Caco-2 (cell line): ENCODE measurements at regions of chr3 and their contacts with region 1.

Region 1: DNA sequence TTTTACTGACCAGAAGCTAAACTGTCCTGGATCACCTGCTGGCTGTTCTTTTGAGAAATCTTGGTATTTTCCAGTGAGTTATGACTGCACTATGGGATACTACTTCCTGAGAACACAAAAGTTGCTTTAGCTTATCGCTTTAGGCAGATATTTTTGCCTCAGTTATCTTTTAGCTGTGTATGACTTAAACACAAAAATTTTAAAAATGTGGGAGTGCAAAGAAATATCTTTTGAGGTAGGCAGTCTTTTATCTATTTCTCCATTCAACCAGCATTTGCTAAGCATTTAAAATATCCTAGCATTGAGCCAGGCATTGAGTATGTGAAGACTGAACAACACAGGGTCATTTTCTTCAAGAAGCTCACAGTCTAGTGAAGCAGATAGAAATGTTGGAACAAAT is 981.9 kb downstream of the FHIT start:
- DNase-seq: peak in 1 of 2 experiments; percentile 55
- H3K4me3 ChIP-seq: no peak overlapping the region
- H3K4me3 Mint-ChIP-seq: peak overlapping the region; percentile 24
- H3K27ac Mint-ChIP-seq: peak overlapping the region; percentile 95
- H3K4me1 ChIP-seq: peaks cover 50% of the 10 kb centered on the region
- H3K4me1 Mint-ChIP-seq: peaks cover 33% of the 10 kb centered on the region
- H3K27me3 ChIP-seq: no peaks in the 10 kb centered on the region
- H3K27me3 Mint-ChIP-seq: no peaks in the 10 kb centered on the region
- CTCF ChIP-seq: no peak

Region 2: GRCh38 chr3:60307562-60308199 is 38.3 kb after region 1 on chr3:
- CTCF ChIA-PET with region 1: no interaction called
- POLR2A ChIA-PET with region 1: no interaction called
- intact Hi-C with region 1: loop called (anchors 2 kb)
- DNase-seq: no peak
- H3K4me3 ChIP-seq: no peak overlapping the region
- H3K4me3 Mint-ChIP-seq: no peak overlapping the region
- H3K27ac Mint-ChIP-seq: no peak overlapping the region
- H3K4me1 ChIP-seq: peaks cover 16% of the 10 kb centered on the region; the same call in 1 of the 2 replicates
- H3K4me1 Mint-ChIP-seq: peaks cover 26% of the 10 kb centered on the region
- H3K27me3 ChIP-seq: no peaks in the 10 kb centered on the region
- H3K27me3 Mint-ChIP-seq: no peaks in the 10 kb centered on the region
- CTCF ChIP-seq: no peak

Region 3: GRCh38 chr3:60313951-60314461 is 44.6 kb after region 1 on chr3:
- CTCF ChIA-PET with region 1: no interaction called
- POLR2A ChIA-PET with region 1: no interaction called
- intact Hi-C with region 1: loop called (anchors 1 kb)
- DNase-seq: peak; percentile 32 to 39
- H3K4me3 ChIP-seq: no peak overlapping the region
- H3K4me3 Mint-ChIP-seq: no peak overlapping the region
- H3K27ac Mint-ChIP-seq: no peak overlapping the region
- H3K4me1 ChIP-seq: peaks cover 26% of the 10 kb centered on the region
- H3K4me1 Mint-ChIP-seq: peaks cover 13% of the 10 kb centered on the region
- H3K27me3 ChIP-seq: no peaks in the 10 kb centered on the region
- H3K27me3 Mint-ChIP-seq: no peaks in the 10 kb centered on the region
- CTCF ChIP-seq: no peak

Region 4: GRCh38 chr3:60399861-60400845 is 130.8 kb after region 1 on chr3:
- CTCF ChIA-PET with region 1: no interaction called
- POLR2A ChIA-PET with region 1: no interaction called
- intact Hi-C with region 1: no loop called
- DNase-seq: no peak
- H3K4me3 ChIP-seq: no peak overlapping the region
- H3K4me3 Mint-ChIP-seq: no peak overlapping the region
- H3K27ac Mint-ChIP-seq: no peak overlapping the region
- H3K4me1 ChIP-seq: no peaks in the 10 kb centered on the region
- H3K4me1 Mint-ChIP-seq: no peaks in the 10 kb centered on the region
- H3K27me3 ChIP-seq: no peaks in the 10 kb centered on the region
- H3K27me3 Mint-ChIP-seq: no peaks in the 10 kb centered on the region
- CTCF ChIP-seq: no peak

Region 5: DNA sequence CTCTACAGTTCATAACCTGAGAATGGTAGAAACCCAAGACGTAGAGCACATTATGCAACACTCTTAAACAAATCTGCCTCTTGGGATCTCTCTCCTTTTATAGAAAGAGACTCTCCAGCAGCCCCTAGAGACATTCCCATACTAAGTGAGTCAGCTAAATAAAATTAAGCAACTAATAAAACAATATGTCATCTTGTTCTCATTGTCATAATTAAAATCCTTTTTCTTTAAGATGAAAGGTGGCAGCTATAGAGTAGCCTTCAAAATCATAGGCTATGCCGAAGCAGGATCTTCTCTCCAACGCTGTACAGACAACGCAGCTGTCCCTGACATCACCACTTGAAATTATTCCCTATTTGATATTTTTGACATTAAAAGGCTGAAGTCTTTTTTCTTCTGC is 191.9 kb after region 1 on chr3:
- CTCF ChIA-PET with region 1: no interaction called
- POLR2A ChIA-PET with region 1: no interaction called
- intact Hi-C with region 1: no loop called
- DNase-seq: no peak
- H3K4me3 ChIP-seq: no peak overlapping the region
- H3K4me3 Mint-ChIP-seq: no peak overlapping the region
- H3K27ac Mint-ChIP-seq: no peak overlapping the region
- H3K4me1 ChIP-seq: no peaks in the 10 kb centered on the region
- H3K4me1 Mint-ChIP-seq: no peaks in the 10 kb centered on the region
- H3K27me3 ChIP-seq: no peaks in the 10 kb centered on the region
- H3K27me3 Mint-ChIP-seq: peaks cover 3% of the 10 kb centered on the region
- CTCF ChIP-seq: no peak

Region 6: DNA sequence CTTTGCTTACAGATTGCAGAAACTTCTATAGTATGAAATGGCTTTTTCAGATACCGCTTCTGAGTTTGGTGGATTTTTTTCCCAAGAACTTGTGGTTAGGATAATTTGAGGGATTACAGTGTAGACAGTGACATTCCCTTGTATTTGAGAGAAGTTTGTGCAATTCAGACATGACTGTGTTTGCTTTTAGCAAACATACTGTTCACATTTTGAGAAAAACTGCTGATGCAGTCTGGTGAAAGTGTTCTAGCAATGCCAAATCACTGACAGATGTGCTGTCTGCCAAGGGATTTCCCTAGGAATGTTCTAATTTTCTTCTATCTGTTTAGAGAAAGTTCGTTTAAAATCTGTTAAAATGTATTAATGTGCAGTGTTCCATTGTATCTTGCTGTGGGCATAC is 329.3 kb after region 1 on chr3:
- CTCF ChIA-PET with region 1: no interaction called
- POLR2A ChIA-PET with region 1: no interaction called
- intact Hi-C with region 1: no loop called
- DNase-seq: peak in 1 of 2 experiments; percentile 12
- H3K4me3 ChIP-seq: no peak overlapping the region
- H3K4me3 Mint-ChIP-seq: no peak overlapping the region
- H3K27ac Mint-ChIP-seq: no peak overlapping the region
- H3K4me1 ChIP-seq: peaks cover 6% of the 10 kb centered on the region
- H3K4me1 Mint-ChIP-seq: no peaks in the 10 kb centered on the region
- H3K27me3 ChIP-seq: no peaks in the 10 kb centered on the region
- H3K27me3 Mint-ChIP-seq: no peaks in the 10 kb centered on the region
- CTCF ChIP-seq: no peak